ENCODE measurements at regions of chr3 and their contacts with region 1.

Region 1: DNA sequence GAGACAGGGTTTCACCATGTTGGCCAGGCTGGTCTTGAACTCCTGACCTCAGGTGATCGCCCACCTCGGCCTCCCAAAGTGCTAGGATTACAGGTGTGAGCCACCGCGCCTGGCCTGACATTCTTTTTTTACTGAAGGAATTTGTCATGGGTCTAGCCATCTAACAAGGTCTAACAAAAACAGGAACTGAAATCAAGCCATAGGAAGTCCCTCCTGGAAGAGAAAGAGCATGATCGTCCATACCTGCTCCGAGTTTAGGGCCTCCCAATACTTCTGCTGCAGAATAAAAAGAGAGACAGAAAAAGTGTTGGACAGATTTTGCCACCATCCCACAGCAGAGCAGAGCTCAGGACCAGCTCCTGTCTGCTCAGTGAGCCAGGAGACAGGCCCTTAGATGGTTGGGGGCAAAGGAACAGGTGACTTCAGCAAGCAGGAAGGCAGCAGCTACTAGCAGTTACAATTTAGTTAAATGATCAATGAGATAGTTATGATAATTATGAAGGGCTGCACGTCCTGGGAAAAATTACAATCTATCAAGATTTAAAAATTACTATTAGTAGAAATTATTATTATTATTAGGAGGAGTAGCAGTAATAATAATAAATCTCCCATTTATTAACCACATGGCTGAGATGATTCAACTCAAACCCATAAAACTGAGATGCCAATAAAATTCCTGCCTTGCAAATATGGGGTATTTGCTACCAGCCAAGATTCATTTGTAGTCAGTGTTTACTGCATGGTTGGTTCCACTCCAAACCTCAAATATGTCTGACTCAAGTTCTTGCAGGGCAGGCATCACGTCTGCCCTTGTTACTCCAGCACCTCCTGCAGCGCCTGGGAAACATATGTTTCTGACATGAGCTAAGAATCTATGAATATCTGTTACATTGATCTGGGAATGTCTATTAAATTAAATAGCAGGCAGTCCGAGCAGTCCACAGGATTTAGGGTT is 40.1 kb downstream of the TMEM44 start:
- DNase-seq: no peak
- ATAC-seq: no peak
- H3K4me3 Mint-ChIP-seq: no peak overlapping the region
- H3K27ac Mint-ChIP-seq: no peak overlapping the region
- H3K4me1 Mint-ChIP-seq: peaks cover 3% of the 10 kb centered on the region
- H3K27me3 Mint-ChIP-seq: no peaks in the 10 kb centered on the region

Region 2: GRCh38 chr3:194404365-194405140 is 188.5 kb before region 1 on chr3:
- CTCF ChIA-PET with region 1: interaction called, 3 read pairs
- POLR2A ChIA-PET with region 1: no interaction called
- intact Hi-C with region 1: loop called in 1 of 2 experiments (anchors 5 kb)
- DNase-seq: peak; percentile 59
- ATAC-seq: no peak
- H3K4me3 Mint-ChIP-seq: no peak overlapping the region
- H3K27ac Mint-ChIP-seq: peak overlapping the region; percentile 51
- H3K4me1 Mint-ChIP-seq: peaks cover 26% of the 10 kb centered on the region
- H3K27me3 Mint-ChIP-seq: no peaks in the 10 kb centered on the region

Region 3: DNA sequence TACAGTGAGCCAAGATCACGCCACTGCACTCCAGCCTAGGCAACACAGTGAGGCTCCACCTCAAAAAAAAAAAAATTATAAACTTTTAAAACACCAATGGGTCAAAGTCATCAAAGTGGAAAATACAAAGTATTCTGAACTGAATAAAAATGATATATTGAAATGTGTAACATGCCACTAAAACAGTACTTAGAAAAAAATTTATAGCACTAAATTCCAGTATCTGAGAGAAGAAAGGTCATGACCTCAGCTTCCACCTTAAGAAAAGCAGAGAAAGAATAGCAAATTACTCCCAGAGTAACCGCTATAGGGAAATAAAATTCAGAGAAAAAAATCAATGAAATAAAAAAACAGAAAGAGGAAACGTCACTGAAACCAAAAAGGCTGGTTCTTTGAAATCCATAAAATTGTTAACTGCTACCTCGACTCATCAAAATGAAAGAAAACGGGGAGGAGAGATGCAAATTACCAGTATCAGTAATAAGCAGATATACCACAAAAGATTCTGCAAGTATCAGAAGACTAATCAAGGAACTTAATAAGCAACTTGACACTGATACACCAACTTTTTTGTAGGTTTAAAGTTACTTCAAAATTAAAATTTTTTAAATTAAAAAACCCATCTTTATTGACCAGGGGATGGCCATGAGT is 127.0 kb before region 1 on chr3:
- CTCF ChIA-PET with region 1: interaction called, 46 read pairs
- POLR2A ChIA-PET with region 1: no interaction called
- intact Hi-C with region 1: no loop called
- DNase-seq: no peak
- ATAC-seq: peak; percentile 74
- H3K4me3 Mint-ChIP-seq: no peak overlapping the region
- H3K27ac Mint-ChIP-seq: peak overlapping the region; percentile 72
- H3K4me1 Mint-ChIP-seq: peaks cover 30% of the 10 kb centered on the region
- H3K27me3 Mint-ChIP-seq: no peaks in the 10 kb centered on the region

Region 4: DNA sequence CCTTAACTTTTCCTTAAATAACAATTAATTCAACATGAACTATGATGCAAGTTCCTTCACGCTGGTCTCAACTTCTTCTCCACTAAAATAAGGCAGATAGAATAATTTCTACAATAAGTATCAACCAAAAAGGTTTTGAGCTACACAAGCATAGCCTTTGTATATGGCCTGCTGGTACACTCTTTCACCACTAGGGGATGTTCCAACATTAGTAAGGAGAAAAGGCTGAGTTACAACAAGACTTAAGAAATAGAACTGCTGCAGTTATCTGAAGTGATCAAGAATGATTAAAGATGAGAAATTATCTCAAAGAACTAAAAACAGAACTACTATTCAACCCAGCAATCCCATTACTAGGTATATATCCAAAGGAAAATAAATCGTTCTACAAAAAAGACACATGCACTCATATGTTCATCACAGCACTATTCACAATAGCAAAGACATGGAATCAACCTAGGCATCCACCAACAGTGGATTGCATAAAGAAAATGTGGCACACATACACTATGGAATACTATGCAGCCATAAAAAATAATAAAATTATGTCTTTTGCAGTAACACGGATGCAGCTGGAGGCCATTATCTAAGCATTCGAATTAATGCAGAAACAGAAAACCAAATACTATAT is 120.7 kb before region 1 on chr3:
- CTCF ChIA-PET with region 1: interaction called, 46 read pairs
- POLR2A ChIA-PET with region 1: interaction called, 4 read pairs
- intact Hi-C with region 1: loop called (anchors 1 kb)
- DNase-seq: no peak
- ATAC-seq: peak; percentile 88
- H3K4me3 Mint-ChIP-seq: no peak overlapping the region
- H3K27ac Mint-ChIP-seq: no peak overlapping the region
- H3K4me1 Mint-ChIP-seq: peaks cover 23% of the 10 kb centered on the region
- H3K27me3 Mint-ChIP-seq: no peaks in the 10 kb centered on the region

Region 5: GRCh38 chr3:194481103-194481502 is 112.0 kb before region 1 on chr3:
- CTCF ChIA-PET with region 1: interaction called, 11 read pairs
- POLR2A ChIA-PET with region 1: no interaction called
- intact Hi-C with region 1: no loop called
- DNase-seq: no peak
- ATAC-seq: peak; percentile 16
- H3K4me3 Mint-ChIP-seq: peak overlapping the region; percentile 2
- H3K27ac Mint-ChIP-seq: peak overlapping the region; percentile 70
- H3K4me1 Mint-ChIP-seq: peaks cover 49% of the 10 kb centered on the region
- H3K27me3 Mint-ChIP-seq: no peaks in the 10 kb centered on the region

Region 6: DNA sequence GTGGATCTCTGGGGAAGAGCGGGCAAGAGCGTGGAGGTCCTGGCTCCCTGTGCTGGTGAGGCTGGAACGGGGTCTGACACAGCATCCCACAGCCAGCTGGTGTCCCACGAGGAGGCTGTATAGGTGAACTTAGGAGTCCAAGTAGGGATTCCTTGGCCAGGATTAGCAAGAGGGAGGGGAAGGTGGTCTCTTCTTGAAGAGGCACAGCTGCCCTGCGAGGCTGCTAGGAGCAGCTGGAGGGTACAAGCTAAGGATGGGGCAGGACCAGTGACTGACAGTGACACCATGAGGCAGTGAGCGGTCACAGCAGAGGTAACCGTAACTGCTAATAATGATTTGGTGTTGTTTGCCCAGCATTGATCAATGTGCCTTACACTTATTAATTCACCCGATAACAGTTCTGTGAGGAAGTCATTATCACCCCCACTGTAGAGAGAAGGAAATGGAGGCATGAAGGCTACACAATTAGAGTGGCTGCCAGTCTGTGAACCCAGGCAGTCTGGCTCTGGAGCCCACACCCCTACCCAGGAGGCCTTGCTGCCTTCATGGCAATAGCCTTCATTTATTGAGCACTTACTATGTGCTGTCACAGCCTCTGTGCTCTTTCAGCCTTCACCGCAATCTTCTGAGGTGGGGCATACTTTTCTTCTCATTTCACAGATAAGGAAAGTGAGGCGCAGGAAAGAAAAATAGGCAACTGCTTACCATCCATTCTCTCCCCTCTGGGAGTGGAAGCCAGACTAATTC is 19.2 kb before region 1 on chr3:
- CTCF ChIA-PET with region 1: interaction called, 18 read pairs
- POLR2A ChIA-PET with region 1: no interaction called
- intact Hi-C with region 1: no loop called
- DNase-seq: peak; percentile 65
- ATAC-seq: peak; percentile 92
- H3K4me3 Mint-ChIP-seq: no peak overlapping the region
- H3K27ac Mint-ChIP-seq: no peak overlapping the region
- H3K4me1 Mint-ChIP-seq: peaks cover 22% of the 10 kb centered on the region
- H3K27me3 Mint-ChIP-seq: peaks cover 20% of the 10 kb centered on the region

Region 7: GRCh38 chr3:194615226-194615625 is 22.2 kb after region 1 on chr3:
- CTCF ChIA-PET with region 1: interaction called, 13 read pairs
- POLR2A ChIA-PET with region 1: no interaction called
- intact Hi-C with region 1: no loop called
- DNase-seq: no peak
- ATAC-seq: no peak
- H3K4me3 Mint-ChIP-seq: no peak overlapping the region
- H3K27ac Mint-ChIP-seq: no peak overlapping the region
- H3K4me1 Mint-ChIP-seq: no peaks in the 10 kb centered on the region
- H3K27me3 Mint-ChIP-seq: no peaks in the 10 kb centered on the region

Measured in activated CD4-positive, alpha-beta T cell treated with anti-CD3 and anti-CD28 coated beads for 36 hours (primary cell).